ENCODE measurements at regions of chr17 and their contacts with region 1.

Region 1: GRCh38 chr17:82775001-82775823 is 23.3 kb downstream of the TBCD start:
- DNase-seq: peak; percentile 70 to 87 (median 78)
- H3K4me3 ChIP-seq: peak overlapping the region in 2 of 3 donors; percentile 21 to 32
- H3K27ac ChIP-seq: no peak overlapping the region
- H3K4me1 ChIP-seq: peaks cover 0 to 5% (median 0%) of the 10 kb centered on the region in 3 donors
- H3K27me3 ChIP-seq: no peaks in the 10 kb centered on the region
- CTCF ChIP-seq: peak; percentile 82

Region 2: GRCh38 chr17:82351716-82352488 is 423.3 kb before region 1 on chr17:
- intact Hi-C with region 1: loop called (anchors 10 kb)
- DNase-seq: peak; percentile 90 to 94 (median 93)
- H3K4me3 ChIP-seq: no peak overlapping the region
- H3K27ac ChIP-seq: no peak overlapping the region
- H3K4me1 ChIP-seq: peaks cover 0 to 8% (median 0%) of the 10 kb centered on the region in 3 donors
- H3K27me3 ChIP-seq: no peaks in the 10 kb centered on the region
- CTCF ChIP-seq: peak; percentile 99

Measured in kidney (tissue), 22 donors.